Cardiac septum (tissue), 1 donor: ENCODE measurements at regions of chr1 and their contacts with region 1.

Region 1: DNA sequence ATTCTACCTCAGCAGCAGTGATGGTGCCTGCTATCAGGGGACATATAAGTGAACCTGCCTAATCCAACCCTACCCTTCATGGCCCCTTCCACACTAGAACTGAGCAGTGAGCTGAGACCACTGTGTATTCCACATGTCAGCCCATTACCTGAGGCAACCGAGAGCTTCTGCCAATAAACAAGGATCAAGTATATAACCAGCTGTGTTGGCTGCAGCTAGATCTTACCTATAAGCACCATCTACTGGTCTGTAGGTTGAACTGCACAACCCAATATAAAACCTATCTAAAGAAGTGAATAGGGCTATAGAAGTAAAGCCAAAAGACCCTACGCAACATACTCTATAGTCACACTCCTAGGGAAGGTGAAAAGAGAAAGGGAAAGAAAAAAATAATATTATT is 376.9 kb downstream of the HHIPL2 start:
- DNase-seq: no peak

Region 2: DNA sequence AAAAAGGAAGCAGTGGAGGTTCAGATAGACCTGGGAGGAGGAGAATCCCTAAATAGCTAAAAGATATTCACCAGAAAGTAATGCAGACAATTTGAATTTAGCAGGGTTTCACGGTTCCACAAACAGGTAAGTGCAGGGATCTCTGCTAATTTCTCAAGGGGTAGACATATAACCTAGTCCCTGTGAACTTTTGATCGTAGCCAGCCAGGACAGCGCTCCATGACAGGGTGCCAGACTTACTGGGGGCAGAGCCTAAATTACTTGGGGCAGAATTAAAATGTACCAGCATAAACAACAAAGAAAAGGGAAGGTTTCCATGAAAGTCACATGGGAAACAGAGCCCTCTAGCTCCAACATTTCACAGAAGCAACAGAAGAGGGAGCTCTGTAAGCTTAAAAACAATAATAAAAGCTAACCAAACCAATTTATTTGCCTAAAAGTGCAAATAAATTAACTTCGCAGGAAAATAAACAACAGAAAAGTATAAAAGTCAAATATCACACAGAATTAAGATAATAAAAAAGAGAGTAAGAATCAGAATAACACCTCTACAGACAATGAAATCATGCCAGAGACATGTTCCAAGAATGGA is 627.4 kb before region 1 on chr1:
- intact Hi-C with region 1: loop called (anchors 5 kb)
- DNase-seq: no peak

Region 3: GRCh38 chr1:221816899-221817298 is 354.1 kb before region 1 on chr1:
- intact Hi-C with region 1: no loop called
- DNase-seq: no peak